Naive thymus-derived CD4-positive, alpha-beta T cell (primary cell): ENCODE measurements at regions of chr17 and their contacts with region 1.

Region 1: DNA sequence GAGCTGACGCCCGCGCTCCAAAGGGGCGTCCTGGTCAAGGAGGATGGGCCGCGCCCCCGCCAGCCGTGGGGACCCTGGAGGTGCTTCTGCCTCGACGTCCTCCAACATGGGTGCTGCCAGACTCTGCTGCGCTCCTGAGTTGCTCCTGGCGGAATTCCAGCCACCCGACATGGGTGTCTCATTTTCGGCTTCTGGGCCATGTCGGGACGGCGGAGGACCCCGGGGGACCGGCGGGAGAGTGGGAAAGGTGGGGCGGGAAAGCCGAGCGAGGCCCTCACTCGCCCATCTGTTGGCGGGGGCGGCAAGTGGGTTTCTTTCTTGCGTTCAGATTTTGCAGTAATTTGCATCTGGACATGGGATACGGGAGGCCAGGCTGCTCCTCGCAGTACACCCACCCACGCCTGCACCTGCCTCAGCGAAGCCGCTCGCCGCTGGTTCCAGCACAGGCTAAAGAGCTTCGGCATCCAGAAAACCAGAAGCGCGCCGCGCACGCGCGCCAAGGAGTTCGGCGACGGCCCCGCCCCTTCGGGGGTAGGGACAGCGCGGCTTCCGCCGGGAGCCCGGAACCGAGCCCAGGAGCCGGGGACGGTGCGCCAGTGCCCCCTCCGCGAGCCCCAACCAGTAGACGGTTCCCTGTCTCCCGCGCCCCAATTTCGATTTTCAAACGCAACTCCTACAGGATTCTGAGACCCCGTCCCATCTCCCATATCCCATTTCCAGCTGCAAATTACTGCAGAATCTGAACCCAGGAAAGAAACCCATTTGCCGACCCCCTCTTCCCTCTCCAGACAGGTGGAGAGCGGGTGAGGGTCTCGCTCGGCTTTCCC is at the start of gene ARMC7:
- DNase-seq: peak; percentile 79 to 96 (median 86)
- ATAC-seq: peak; percentile 90
- H3K4me3 ChIP-seq: peak within 1 kb of the TSS; percentile 81
- H3K4me3 Mint-ChIP-seq: peak within 1 kb of the TSS; percentile 72 to 94 (median 89)
- H3K27ac ChIP-seq: peak within 1 kb of the TSS; percentile 75
- H3K27ac Mint-ChIP-seq: peak within 1 kb of the TSS; percentile 68 to 93 (median 85)
- H3K4me1 ChIP-seq: peaks cover 19 to 20% of the 10 kb centered on the region in 2 donors
- H3K4me1 Mint-ChIP-seq: peaks cover 21 to 41% (median 34%) of the 10 kb centered on the region in 7 donors
- H3K27me3 ChIP-seq: no peaks in the 10 kb centered on the region
- H3K27me3 Mint-ChIP-seq: no peaks in the 10 kb centered on the region
- total RNA-seq, gene ARMC7: 5.8 to 18.9 (median 17.8) TPM

Region 2: GRCh38 chr17:75012346-75013091 is 97.1 kb before region 1 on chr17 and contains the start of gene MRPL58:
- CTCF ChIA-PET with region 1: interaction called, 4 read pairs
- POLR2A ChIA-PET with region 1: interaction called, 10 read pairs
- intact Hi-C with region 1: no loop called
- DNase-seq: peak; percentile 66 to 81 (median 75)
- ATAC-seq: peak; percentile 97
- H3K4me3 ChIP-seq: peak within 1 kb of the TSS; percentile 69
- H3K4me3 Mint-ChIP-seq: peak within 1 kb of the TSS; percentile 76 to 98 (median 94)
- H3K27ac ChIP-seq: peak within 1 kb of the TSS; percentile 83
- H3K27ac Mint-ChIP-seq: peak within 1 kb of the TSS; percentile 5 to 97 (median 92)
- H3K4me1 ChIP-seq: peaks cover 9 to 14% of the 10 kb centered on the region in 2 donors
- H3K4me1 Mint-ChIP-seq: peaks cover 25 to 38% (median 35%) of the 10 kb centered on the region in 7 donors
- H3K27me3 ChIP-seq: no peaks in the 10 kb centered on the region
- H3K27me3 Mint-ChIP-seq: peaks cover 0 to 4% (median 0%) of the 10 kb centered on the region in 5 donors
- total RNA-seq, gene MRPL58: 11.7 to 46.1 (median 23.0) TPM

Region 3: GRCh38 chr17:75059369-75060345 is 50.0 kb before region 1 on chr17:
- CTCF ChIA-PET with region 1: interaction called, 41 read pairs
- POLR2A ChIA-PET with region 1: interaction called, 17 read pairs
- intact Hi-C with region 1: loop called in 1 of 2 experiments (anchors 1 kb)
- DNase-seq: peak in 6 of 9 donors; percentile 32 to 56 (median 48)
- ATAC-seq: peak; percentile 79
- H3K4me3 ChIP-seq: no peak overlapping the region
- H3K4me3 Mint-ChIP-seq: no peak overlapping the region
- H3K27ac ChIP-seq: peak overlapping the region; percentile 23
- H3K27ac Mint-ChIP-seq: peak overlapping the region in 8 of 9 donors; percentile 51 to 91 (median 81)
- H3K4me1 ChIP-seq: no peaks in the 10 kb centered on the region
- H3K4me1 Mint-ChIP-seq: peaks cover 0 to 26% (median 20%) of the 10 kb centered on the region in 7 donors
- H3K27me3 ChIP-seq: no peaks in the 10 kb centered on the region
- H3K27me3 Mint-ChIP-seq: no peaks in the 10 kb centered on the region

Region 4: DNA sequence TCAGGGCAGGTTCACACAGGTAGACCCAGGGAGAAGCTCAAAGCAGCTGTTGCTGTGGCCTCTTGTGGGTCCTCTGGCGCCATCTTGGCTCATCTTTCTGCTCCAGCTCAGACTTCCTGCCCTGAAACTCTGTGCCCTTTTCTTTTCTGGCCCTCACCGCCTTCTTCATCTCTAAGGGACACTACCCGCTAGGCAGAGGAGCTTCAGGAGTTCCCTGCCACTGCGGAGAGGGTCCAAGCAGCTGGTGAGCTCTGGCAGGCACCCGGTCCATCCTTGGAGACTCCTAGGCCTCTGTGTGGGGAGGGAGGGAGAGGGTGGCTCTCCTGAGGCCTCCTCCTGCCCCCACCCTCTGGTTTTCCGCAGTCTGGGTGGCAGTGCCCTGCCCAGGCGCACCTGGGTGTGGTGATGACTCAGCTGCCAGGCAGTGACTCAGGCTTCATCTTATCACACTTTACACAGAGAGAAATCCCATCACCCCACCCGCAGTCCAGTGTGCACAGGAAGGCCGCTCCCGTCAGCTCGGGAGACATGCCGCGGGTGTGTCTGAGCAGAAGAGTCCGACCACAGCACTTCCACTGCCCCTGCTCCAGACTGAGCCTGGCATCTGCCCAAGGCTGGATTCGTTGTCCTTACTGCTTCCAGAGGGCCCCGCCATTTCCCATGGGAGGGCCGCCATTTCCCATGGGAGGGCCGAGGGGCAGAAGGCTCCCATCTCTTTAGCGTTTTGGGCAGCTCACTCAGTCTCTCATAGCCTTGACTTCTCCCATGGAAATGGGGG is 14.6 kb after region 1 on chr17:
- CTCF ChIA-PET with region 1: interaction called, 47 read pairs
- POLR2A ChIA-PET with region 1: interaction called, 11 read pairs
- intact Hi-C with region 1: loop called in 1 of 2 experiments (anchors 1 kb)
- DNase-seq: peak in 1 of 9 donors; percentile 48
- ATAC-seq: peak; percentile 80
- H3K4me3 ChIP-seq: no peak overlapping the region
- H3K4me3 Mint-ChIP-seq: peak overlapping the region in 3 of 10 donors; percentile 6 to 81 (median 16)
- H3K27ac ChIP-seq: no peak overlapping the region
- H3K27ac Mint-ChIP-seq: peak overlapping the region in 6 of 9 donors; percentile 31 to 91 (median 58)
- H3K4me1 ChIP-seq: peaks cover 3 to 18% of the 10 kb centered on the region in 2 donors
- H3K4me1 Mint-ChIP-seq: peaks cover 24 to 40% (median 33%) of the 10 kb centered on the region in 7 donors
- H3K27me3 ChIP-seq: no peaks in the 10 kb centered on the region
- H3K27me3 Mint-ChIP-seq: no peaks in the 10 kb centered on the region

Region 5: DNA sequence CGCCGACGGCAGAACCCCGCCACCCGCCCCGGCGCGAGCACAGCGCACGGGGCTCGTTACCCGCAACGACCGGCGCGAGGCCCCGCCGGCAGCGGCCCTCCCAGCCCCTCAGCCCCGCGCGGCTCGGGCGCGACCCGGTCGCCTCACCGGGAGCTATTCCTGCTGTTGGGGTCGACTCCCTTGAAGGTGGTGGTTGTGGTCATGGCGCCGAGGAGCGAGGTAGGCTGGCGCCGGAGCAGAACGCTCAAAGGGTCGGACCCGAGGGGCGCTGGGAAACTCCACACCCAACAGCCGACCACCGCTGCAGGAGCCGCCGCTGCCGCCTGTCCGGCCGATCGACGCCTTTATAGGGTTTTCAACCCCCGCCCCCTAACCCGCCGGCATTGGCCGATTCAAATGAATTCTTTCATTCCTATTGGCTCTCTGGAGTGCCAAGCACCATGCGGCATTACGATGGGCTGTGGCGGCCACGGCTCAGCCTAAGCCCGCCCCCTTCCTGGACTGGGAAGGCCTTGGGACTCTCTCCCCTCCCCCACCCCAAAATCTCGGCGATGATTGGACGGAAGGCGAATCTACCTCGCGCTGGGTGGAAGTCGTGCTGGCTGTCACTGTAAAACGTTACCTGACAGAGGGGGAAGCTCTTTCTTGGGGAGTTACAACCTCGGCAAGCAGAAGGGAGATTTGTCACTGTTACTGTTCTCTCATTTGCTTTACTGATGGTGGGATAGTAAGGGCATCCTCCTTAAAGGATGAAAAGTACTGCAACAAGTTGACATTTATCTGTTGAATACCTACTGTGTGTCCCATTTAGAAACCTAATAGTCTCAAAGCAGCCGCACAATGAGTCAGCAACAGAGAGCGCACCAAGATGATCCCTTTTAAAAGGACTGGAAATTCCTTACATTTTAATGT is 44.8 kb after region 1 on chr17 and contains the start of gene JPT1:
- CTCF ChIA-PET with region 1: interaction called, 12 read pairs
- POLR2A ChIA-PET with region 1: interaction called, 8 read pairs
- intact Hi-C with region 1: loop called (anchors 1 kb)
- DNase-seq: peak; percentile 82 to 98 (median 96)
- ATAC-seq: peak; percentile 100
- H3K4me3 ChIP-seq: peak within 1 kb of the TSS; percentile 84
- H3K4me3 Mint-ChIP-seq: peak within 1 kb of the TSS; percentile 88 to 98 (median 94)
- H3K27ac ChIP-seq: peak within 1 kb of the TSS; percentile 80
- H3K27ac Mint-ChIP-seq: peak within 1 kb of the TSS; percentile 78 to 96 (median 92)
- H3K4me1 ChIP-seq: peaks cover 0 to 18% of the 10 kb centered on the region in 2 donors
- H3K4me1 Mint-ChIP-seq: peaks cover 11 to 39% (median 36%) of the 10 kb centered on the region in 7 donors
- H3K27me3 ChIP-seq: no peaks in the 10 kb centered on the region
- H3K27me3 Mint-ChIP-seq: no peaks in the 10 kb centered on the region
- total RNA-seq, gene JPT1: 12.3 to 227 (median 29.3) TPM

Region 6: GRCh38 chr17:75205037-75205792 is 95.6 kb after region 1 on chr17 and contains the start of gene NUP85:
- CTCF ChIA-PET with region 1: interaction called, 136 read pairs
- POLR2A ChIA-PET with region 1: interaction called, 16 read pairs
- intact Hi-C with region 1: loop called (anchors 1 kb)
- DNase-seq: peak; percentile 87 to 97 (median 93)
- ATAC-seq: peak; percentile 96
- H3K4me3 ChIP-seq: peak within 1 kb of the TSS; percentile 82
- H3K4me3 Mint-ChIP-seq: peak within 1 kb of the TSS; percentile 91 to 98 (median 96)
- H3K27ac ChIP-seq: peak within 1 kb of the TSS; percentile 95
- H3K27ac Mint-ChIP-seq: peak within 1 kb of the TSS; percentile 94 to 100 (median 99)
- H3K4me1 ChIP-seq: peaks cover 0 to 5% of the 10 kb centered on the region in 2 donors
- H3K4me1 Mint-ChIP-seq: peaks cover 12 to 47% (median 26%) of the 10 kb centered on the region in 7 donors
- H3K27me3 ChIP-seq: no peaks in the 10 kb centered on the region
- H3K27me3 Mint-ChIP-seq: no peaks in the 10 kb centered on the region
- total RNA-seq, gene NUP85: 96.3 to 143 (median 99.2) TPM

Region 7: DNA sequence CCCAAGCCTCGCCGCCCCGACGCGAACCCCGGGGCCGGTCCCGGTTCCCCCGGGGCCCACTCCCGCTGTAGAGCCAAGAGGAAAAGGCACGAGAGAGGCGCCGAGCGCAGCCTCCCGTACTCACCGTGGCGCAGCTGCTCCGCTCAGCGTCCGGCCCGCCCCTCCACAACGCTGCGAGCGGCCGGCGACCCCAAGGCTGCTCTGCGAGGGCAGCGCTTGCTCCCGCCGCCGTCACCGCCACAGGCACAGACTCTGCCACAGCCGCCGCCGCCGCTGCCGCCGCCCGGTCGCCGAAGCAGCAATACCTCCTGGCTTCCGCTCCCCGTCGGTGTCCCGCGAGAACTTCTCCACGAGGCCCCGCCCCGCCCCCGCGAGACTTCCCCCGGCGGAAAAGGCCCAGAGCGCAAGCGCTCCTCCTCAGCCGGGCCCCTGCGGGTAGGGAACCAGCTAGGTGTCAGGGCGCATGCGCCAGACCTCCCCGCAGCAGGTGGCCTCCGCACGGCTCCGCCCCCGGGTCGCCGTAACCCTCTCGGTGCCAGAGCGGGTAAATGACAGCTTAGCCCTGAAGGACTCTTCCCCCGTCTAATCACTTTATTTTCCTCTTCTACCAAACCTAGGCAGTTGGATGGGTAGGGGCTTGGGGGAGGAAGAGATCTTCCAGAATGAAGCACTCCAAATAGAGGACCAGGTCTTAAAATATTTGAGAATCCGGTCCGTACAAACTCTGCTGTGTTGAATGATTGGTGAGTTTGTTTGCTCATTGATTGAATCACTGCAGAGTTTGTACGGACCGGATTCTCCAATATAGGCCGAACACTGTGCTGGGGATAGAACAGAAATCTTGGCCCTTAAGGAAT is 296.0 kb after region 1 on chr17 and contains the start of gene GRB2:
- CTCF ChIA-PET with region 1: no interaction called
- POLR2A ChIA-PET with region 1: no interaction called
- intact Hi-C with region 1: loop called (anchors 2 to 5 kb)
- DNase-seq: peak; percentile 98 to 100 (median 100)
- ATAC-seq: peak; percentile 93
- H3K4me3 ChIP-seq: peak within 1 kb of the TSS; percentile 83
- H3K4me3 Mint-ChIP-seq: peak within 1 kb of the TSS; percentile 91 to 100 (median 96)
- H3K27ac ChIP-seq: peak within 1 kb of the TSS; percentile 91
- H3K27ac Mint-ChIP-seq: peak within 1 kb of the TSS; percentile 84 to 98 (median 95)
- H3K4me1 ChIP-seq: peaks cover 31 to 33% of the 10 kb centered on the region in 2 donors
- H3K4me1 Mint-ChIP-seq: peaks cover 26 to 51% (median 47%) of the 10 kb centered on the region in 7 donors
- H3K27me3 ChIP-seq: no peaks in the 10 kb centered on the region
- H3K27me3 Mint-ChIP-seq: no peaks in the 10 kb centered on the region
- total RNA-seq, gene GRB2: 112 to 167 (median 139) TPM